Aorta (tissue), 5 donors: ENCODE measurements at regions of chr18 and their contacts with region 1.

Region 1: GRCh38 chr18:74495581-74496507 is at the start of gene CNDP2:
- DNase-seq: peak; percentile 100
- ATAC-seq: peak; percentile 99
- H3K4me3 ChIP-seq: peak within 1 kb of the TSS; percentile 47 to 57
- H3K27ac ChIP-seq: peak within 1 kb of the TSS in 1 of 2 donors; percentile 32
- H3K4me1 ChIP-seq: no peaks in the 10 kb centered on the region
- H3K27me3 ChIP-seq: no peaks in the 10 kb centered on the region
- total RNA-seq, gene CNDP2: 74.0 to 99.2 TPM

Region 2: GRCh38 chr18:74147779-74148542 is 347.9 kb before region 1 on chr18 and contains the starts of genes FBXO15 and TIMM21:
- intact Hi-C with region 1: loop called (anchors 5 to 10 kb)
- DNase-seq: peak; percentile 98 to 99
- ATAC-seq: peak; percentile 99
- H3K4me3 ChIP-seq: peak within 1 kb of the TSS; percentile 98 to 99
- H3K27ac ChIP-seq: peak within 1 kb of the TSS; percentile 29 to 84
- H3K4me1 ChIP-seq: no peaks in the 10 kb centered on the region
- H3K27me3 ChIP-seq: no peaks in the 10 kb centered on the region
- total RNA-seq, gene FBXO15: 0.51 to 0.52 TPM
- total RNA-seq, gene TIMM21: 18.6 to 20.5 TPM

Region 3: DNA sequence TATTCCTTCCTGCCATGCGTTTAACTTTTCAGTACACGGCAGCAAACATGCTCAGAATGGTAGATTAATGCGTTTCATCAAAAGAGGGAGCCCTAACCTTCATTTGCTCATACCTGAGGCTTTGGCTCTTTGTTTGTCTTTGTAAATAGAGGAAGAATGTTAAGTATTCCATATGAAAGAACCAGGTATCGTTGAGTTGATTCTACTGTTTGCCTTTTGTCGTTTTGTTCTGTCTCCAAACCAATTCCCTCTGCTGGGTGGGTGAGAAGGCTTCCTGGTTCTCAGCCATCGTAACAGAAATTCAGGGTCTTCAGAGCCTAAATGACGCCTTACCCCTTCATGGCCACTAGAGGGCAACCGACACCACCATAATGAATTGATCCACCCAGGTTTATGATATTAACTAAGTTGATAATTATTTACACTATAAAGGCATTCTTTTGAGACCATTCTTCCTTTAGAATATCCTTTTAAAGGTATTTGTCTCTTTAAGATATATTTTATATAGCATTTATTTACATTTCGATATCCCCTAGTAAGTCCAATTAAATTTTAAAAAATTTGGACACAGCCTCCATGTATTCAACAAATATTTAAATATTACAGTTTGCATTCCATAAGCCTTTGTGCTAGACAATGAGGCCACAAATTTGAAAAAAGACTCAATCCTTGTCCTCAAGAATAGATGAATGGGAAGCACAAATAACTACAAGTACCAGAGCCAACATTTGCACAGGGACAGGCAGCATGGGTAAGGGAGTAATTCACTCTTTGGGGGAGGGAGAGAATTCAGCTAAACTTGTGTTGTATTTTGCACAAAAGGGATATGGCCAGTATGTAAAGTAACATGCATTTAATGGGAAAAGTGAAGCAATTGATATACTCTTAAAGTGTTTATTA is 299.4 kb before region 1 on chr18:
- intact Hi-C with region 1: loop called (anchors 5 kb)
- DNase-seq: no peak
- ATAC-seq: peak; percentile 85
- H3K4me3 ChIP-seq: no peak overlapping the region
- H3K27ac ChIP-seq: no peak overlapping the region
- H3K4me1 ChIP-seq: no peaks in the 10 kb centered on the region
- H3K27me3 ChIP-seq: no peaks in the 10 kb centered on the region

Region 4: GRCh38 chr18:74291771-74292540 is 203.9 kb before region 1 on chr18 and contains the start of gene CYB5A:
- intact Hi-C with region 1: loop called (anchors 1 to 5 kb)
- DNase-seq: peak; percentile 99
- ATAC-seq: peak; percentile 98
- H3K4me3 ChIP-seq: peak within 1 kb of the TSS; percentile 53 to 66
- H3K27ac ChIP-seq: peak within 1 kb of the TSS in 1 of 2 donors; percentile 13
- H3K4me1 ChIP-seq: peaks cover 0 to 2% of the 10 kb centered on the region in 2 donors
- H3K27me3 ChIP-seq: no peaks in the 10 kb centered on the region
- total RNA-seq, gene CYB5A: 33.2 to 41.6 TPM

Region 5: GRCh38 chr18:74353169-74353775 is 142.6 kb before region 1 on chr18:
- intact Hi-C with region 1: loop called (anchors 2 to 5 kb)
- DNase-seq: peak in 1 of 2 donors; percentile 70
- ATAC-seq: peak; percentile 91
- H3K4me3 ChIP-seq: no peak overlapping the region
- H3K27ac ChIP-seq: no peak overlapping the region
- H3K4me1 ChIP-seq: no peaks in the 10 kb centered on the region
- H3K27me3 ChIP-seq: no peaks in the 10 kb centered on the region

Region 6: GRCh38 chr18:74546751-74547550 is 51.1 kb after region 1 on chr18:
- intact Hi-C with region 1: loop called in 1 of 2 experiments (anchors 5 kb)
- DNase-seq: no peak
- ATAC-seq: peak; percentile 61
- H3K4me3 ChIP-seq: no peak overlapping the region
- H3K27ac ChIP-seq: no peak overlapping the region
- H3K4me1 ChIP-seq: no peaks in the 10 kb centered on the region
- H3K27me3 ChIP-seq: no peaks in the 10 kb centered on the region

Region 7: GRCh38 chr18:74597662-74598349 is 102.0 kb after region 1 on chr18 and contains the start of gene ZNF407:
- intact Hi-C with region 1: loop called in 1 of 2 experiments (anchors 5 kb)
- DNase-seq: peak; percentile 90 to 94
- ATAC-seq: peak; percentile 96
- H3K4me3 ChIP-seq: peak within 1 kb of the TSS; percentile 60 to 91
- H3K27ac ChIP-seq: peak within 1 kb of the TSS; percentile 62 to 96
- H3K4me1 ChIP-seq: no peaks in the 10 kb centered on the region
- H3K27me3 ChIP-seq: no peaks in the 10 kb centered on the region
- total RNA-seq, gene ZNF407: 16.0 to 21.1 TPM